AG04449 (cell line): ENCODE measurements at regions of chr13 and their contacts with region 1.

Region 1: GRCh38 chr13:27826379-27827353 is 34.4 kb downstream of the GSX1 start:
- DNase-seq: peak; percentile 10
- H3K4me3 ChIP-seq: peak overlapping the region; percentile 49
- CTCF ChIP-seq: peak; percentile 95

Region 2: DNA sequence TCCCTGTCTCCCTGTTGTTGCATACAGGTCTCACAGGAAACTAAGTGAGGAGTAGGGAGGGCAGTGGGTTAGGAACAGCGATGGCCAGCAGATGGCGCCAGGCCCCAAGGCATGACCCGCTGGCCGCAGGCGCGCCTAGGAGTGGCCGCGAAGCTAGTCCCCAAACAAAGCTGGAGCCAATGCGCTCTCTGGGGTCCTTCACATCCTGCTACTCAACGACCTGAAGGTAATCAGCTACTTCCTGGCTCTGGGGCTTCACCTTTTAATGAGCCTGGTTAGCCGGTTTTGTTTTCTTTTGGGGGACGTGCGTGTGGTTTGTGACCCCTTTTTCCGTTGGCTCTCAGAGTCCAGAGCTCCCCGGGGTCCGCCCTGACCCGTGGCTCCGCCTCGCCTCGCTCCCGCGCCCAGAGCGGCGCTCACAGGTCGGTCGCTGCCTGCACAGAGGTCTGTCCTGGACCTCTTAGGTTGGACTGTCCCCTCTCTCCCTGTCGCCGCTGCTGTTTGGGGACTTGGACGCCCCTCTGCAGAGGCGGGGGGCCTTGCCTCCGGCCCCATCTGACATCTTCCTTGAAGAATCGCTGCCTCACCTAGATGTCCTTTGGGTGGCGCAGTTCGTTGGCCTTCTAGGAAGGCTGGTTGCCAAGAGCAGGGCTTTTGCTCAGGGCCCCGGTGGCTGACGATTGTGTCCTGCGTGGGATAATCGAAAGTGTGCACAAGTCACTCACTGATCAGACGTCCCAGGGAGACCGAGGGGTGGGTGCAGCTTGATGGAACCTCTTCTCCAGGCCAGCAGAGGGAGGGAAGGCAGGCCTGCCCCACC is 464.4 kb before region 1 on chr13:
- CTCF ChIA-PET with region 1: interaction called, 327 read pairs
- POLR2A ChIA-PET with region 1: no interaction called
- DNase-seq: no peak
- H3K4me3 ChIP-seq: peak overlapping the region; percentile 64
- CTCF ChIP-seq: peak; percentile 97

Region 3: DNA sequence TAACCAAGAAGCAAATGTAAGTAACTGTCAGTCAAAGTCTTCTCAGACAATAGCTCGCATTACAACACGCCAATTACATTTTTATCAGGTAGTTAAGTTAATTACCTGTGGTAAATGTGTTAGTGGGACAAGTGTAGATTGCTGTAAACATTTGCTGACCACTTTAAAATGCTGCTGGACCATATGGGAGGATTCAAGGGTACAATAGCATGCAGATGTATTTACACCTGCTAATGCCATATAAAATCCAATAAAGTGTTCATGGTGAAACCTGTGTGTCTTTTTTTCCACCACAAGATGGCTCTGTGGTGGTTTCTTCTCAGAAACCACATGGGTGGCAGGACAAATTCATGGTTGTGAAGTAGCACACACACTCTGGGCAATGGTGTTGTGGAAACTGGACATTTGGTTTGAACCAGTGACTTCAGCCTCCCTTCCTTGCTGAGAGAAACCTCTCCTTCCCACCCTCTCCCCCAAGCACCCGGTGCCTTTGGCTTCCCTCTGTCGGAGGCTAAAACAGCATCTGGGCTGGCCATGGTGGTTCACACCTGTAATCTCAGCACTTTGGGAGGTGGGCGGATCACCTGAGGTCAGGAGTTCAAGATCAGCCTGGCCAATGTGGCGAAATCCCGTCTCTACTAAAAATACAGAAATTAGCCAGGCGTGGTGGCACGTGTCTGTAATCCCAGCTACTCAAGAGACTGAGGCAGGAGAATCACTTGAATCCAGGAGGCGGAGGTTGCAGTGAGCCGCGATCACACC is 420.3 kb before region 1 on chr13:
- CTCF ChIA-PET with region 1: interaction called, 55 read pairs
- POLR2A ChIA-PET with region 1: no interaction called
- DNase-seq: no peak
- H3K4me3 ChIP-seq: no peak overlapping the region
- CTCF ChIP-seq: peak; percentile 39

Region 4: GRCh38 chr13:27533155-27533643 is 293.5 kb before region 1 on chr13:
- CTCF ChIA-PET with region 1: interaction called, 335 read pairs
- POLR2A ChIA-PET with region 1: interaction called, 4 read pairs
- DNase-seq: no peak
- H3K4me3 ChIP-seq: peak overlapping the region; percentile 20
- CTCF ChIP-seq: peak; percentile 99

Region 5: GRCh38 chr13:27620377-27621115 is 206.1 kb before region 1 on chr13 and contains the start of gene LNX2:
- CTCF ChIA-PET with region 1: interaction called, 11 read pairs
- POLR2A ChIA-PET with region 1: no interaction called
- DNase-seq: peak; percentile 65
- H3K4me3 ChIP-seq: peak within 1 kb of the TSS; percentile 76
- CTCF ChIP-seq: no peak

Region 6: DNA sequence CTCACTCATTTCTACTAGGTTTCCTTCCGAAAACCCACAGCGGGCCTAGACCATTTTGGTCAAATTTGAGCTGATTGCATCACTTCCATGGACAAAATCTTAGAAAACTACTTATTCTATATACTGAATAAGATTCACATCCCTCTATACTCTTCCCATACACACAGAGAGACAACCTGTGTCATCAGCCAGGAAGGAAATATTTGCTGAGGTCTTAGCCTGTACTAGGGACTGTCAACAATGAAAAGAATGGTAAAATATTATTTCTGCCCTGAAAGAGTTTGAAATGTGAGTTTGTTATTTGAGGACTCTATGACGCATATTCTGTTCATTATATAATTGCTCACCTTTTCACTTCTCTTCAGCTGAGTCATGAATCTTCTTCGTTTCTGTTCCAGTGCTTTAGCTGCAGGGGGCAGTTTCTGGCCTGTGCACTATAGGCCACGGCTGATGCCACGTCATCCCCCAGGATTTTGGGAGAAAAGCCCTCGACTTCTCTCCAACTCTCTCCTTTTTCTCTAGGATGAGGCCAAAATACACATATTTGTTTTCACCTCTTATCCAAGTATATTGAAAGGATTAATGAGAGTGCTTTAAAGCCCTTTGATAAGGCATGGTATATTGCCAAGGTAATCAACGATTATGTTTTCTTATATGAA is 13.3 kb after region 1 on chr13:
- CTCF ChIA-PET with region 1: interaction called, 70 read pairs
- POLR2A ChIA-PET with region 1: no interaction called
- DNase-seq: no peak
- H3K4me3 ChIP-seq: no peak overlapping the region
- CTCF ChIP-seq: no peak

Region 7: GRCh38 chr13:27997904-27998522 is 171.3 kb after region 1 on chr13:
- CTCF ChIA-PET with region 1: interaction called, 16 read pairs
- POLR2A ChIA-PET with region 1: no interaction called
- DNase-seq: no peak
- H3K4me3 ChIP-seq: no peak overlapping the region
- CTCF ChIP-seq: peak; percentile 43